ENCODE measurements at regions of chr22 and their contacts with region 1.

Region 1: GRCh38 chr22:25048659-25049647 is 96.4 kb downstream of the KIAA1671 start:
- DNase-seq: peak; percentile 80
- H3K4me3 Mint-ChIP-seq: no peak overlapping the region
- H3K27ac Mint-ChIP-seq: no peak overlapping the region
- H3K4me1 Mint-ChIP-seq: peaks cover 7% of the 10 kb centered on the region
- H3K27me3 Mint-ChIP-seq: no peaks in the 10 kb centered on the region
- CTCF ChIP-seq: peak; percentile 96

Region 2: GRCh38 chr22:24944217-24944937 is 104.6 kb before region 1 on chr22:
- CTCF ChIA-PET with region 1: interaction called, 87 read pairs
- POLR2A ChIA-PET with region 1: no interaction called
- intact Hi-C with region 1: loop called (anchors 1 kb)
- DNase-seq: no peak
- H3K4me3 Mint-ChIP-seq: no peak overlapping the region
- H3K27ac Mint-ChIP-seq: no peak overlapping the region
- H3K4me1 Mint-ChIP-seq: peaks cover 12% of the 10 kb centered on the region
- H3K27me3 Mint-ChIP-seq: no peaks in the 10 kb centered on the region
- CTCF ChIP-seq: no peak

Region 3: GRCh38 chr22:24996420-24996952 is 52.5 kb before region 1 on chr22:
- CTCF ChIA-PET with region 1: interaction called, 57 read pairs
- POLR2A ChIA-PET with region 1: interaction called, 4 read pairs
- intact Hi-C with region 1: loop called (anchors 5 kb)
- DNase-seq: peak; percentile 58
- H3K4me3 Mint-ChIP-seq: peak overlapping the region; percentile 24
- H3K27ac Mint-ChIP-seq: peak overlapping the region; percentile 73
- H3K4me1 Mint-ChIP-seq: peaks cover 55% of the 10 kb centered on the region
- H3K27me3 Mint-ChIP-seq: no peaks in the 10 kb centered on the region
- CTCF ChIP-seq: no peak

Region 4: GRCh38 chr22:25013607-25014006 is 35.3 kb before region 1 on chr22:
- CTCF ChIA-PET with region 1: interaction called, 20 read pairs
- POLR2A ChIA-PET with region 1: no interaction called
- intact Hi-C with region 1: no loop called
- DNase-seq: no peak
- H3K4me3 Mint-ChIP-seq: no peak overlapping the region
- H3K27ac Mint-ChIP-seq: peak overlapping the region; percentile 12
- H3K4me1 Mint-ChIP-seq: peaks cover 14% of the 10 kb centered on the region
- H3K27me3 Mint-ChIP-seq: no peaks in the 10 kb centered on the region
- CTCF ChIP-seq: no peak

Region 5: DNA sequence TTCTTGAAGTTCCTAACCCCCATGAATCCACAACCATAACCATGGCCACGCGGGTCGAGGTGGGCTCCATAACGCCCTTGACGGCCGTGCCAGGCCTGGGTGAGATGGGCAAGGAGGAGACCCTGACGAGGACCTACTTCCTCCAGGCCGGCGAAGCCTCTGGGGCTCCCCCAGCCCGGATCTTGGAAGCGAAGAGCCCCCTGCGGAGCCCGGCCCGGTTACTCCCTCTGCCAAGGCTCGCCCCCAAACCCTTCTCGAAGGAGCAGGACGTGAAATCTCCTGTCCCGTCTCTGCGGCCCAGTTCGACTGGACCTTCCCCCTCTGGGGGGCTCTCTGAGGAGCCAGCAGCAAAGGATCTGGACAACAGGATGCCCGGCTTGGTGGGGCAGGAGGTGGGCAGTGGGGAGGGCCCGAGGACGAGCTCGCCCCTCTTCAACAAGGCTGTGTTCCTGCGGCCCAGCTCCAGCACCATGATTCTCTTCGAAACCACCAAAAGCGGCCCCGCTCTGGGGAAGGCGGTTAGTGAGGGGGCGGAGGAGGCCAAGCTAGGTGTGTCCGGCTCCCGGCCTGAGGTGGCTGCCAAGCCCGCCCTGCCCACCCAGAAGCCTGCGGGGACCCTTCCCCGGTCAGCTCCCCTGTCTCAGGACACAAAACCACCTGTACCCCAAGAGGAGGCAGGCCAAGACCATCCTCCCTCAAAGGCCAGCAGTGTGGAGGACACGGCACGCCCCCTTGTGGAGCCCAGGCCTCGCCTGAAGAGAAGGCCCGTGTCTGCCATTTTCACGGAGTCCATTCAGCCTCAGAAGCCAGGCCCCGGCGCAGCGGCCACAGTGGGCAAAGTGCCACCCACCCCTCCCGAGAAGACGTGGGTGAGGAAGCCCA is 20.8 kb before region 1 on chr22:
- CTCF ChIA-PET with region 1: interaction called, 25 read pairs
- POLR2A ChIA-PET with region 1: interaction called, 3 read pairs
- intact Hi-C with region 1: no loop called
- DNase-seq: no peak
- H3K4me3 Mint-ChIP-seq: no peak overlapping the region
- H3K27ac Mint-ChIP-seq: peak overlapping the region; percentile 79
- H3K4me1 Mint-ChIP-seq: peaks cover 28% of the 10 kb centered on the region
- H3K27me3 Mint-ChIP-seq: no peaks in the 10 kb centered on the region
- CTCF ChIP-seq: peak; percentile 28

Measured in MCF 10A (cell line).